Activated naive CD4-positive, alpha-beta T cell treated with anti-CD3 and anti-CD28 coated beads for 36 hours (primary cell): ENCODE measurements at regions of chr5 and their contacts with region 1.

Region 1: GRCh38 chr5:97297063-97297703 is 114.1 kb upstream of the RIOK2 start:
- DNase-seq: peak; percentile 36
- H3K4me3 Mint-ChIP-seq: no peak overlapping the region
- H3K27ac Mint-ChIP-seq: no peak overlapping the region
- H3K4me1 Mint-ChIP-seq: no peaks in the 10 kb centered on the region
- H3K27me3 Mint-ChIP-seq: no peaks in the 10 kb centered on the region

Region 2: GRCh38 chr5:97383996-97384395 is 86.8 kb after region 1 on chr5:
- CTCF ChIA-PET with region 1: no interaction called
- intact Hi-C with region 1: no loop called
- DNase-seq: no peak
- H3K4me3 Mint-ChIP-seq: no peak overlapping the region
- H3K27ac Mint-ChIP-seq: no peak overlapping the region
- H3K4me1 Mint-ChIP-seq: no peaks in the 10 kb centered on the region
- H3K27me3 Mint-ChIP-seq: no peaks in the 10 kb centered on the region

Region 3: GRCh38 chr5:98157374-98157773 is 860.2 kb after region 1 on chr5:
- CTCF ChIA-PET with region 1: no interaction called
- intact Hi-C with region 1: no loop called
- DNase-seq: no peak
- H3K4me3 Mint-ChIP-seq: no peak overlapping the region
- H3K27ac Mint-ChIP-seq: no peak overlapping the region
- H3K4me1 Mint-ChIP-seq: no peaks in the 10 kb centered on the region
- H3K27me3 Mint-ChIP-seq: no peaks in the 10 kb centered on the region

Region 4: GRCh38 chr5:98827161-98827560 is 1530.0 kb after region 1 on chr5:
- CTCF ChIA-PET with region 1: no interaction called
- intact Hi-C with region 1: loop called (anchors 1 kb)
- DNase-seq: peak; percentile 13
- H3K4me3 Mint-ChIP-seq: no peak overlapping the region
- H3K27ac Mint-ChIP-seq: no peak overlapping the region
- H3K4me1 Mint-ChIP-seq: no peaks in the 10 kb centered on the region
- H3K27me3 Mint-ChIP-seq: no peaks in the 10 kb centered on the region